Caco-2 (cell line): ENCODE measurements at regions of chr12 and their contacts with region 1.

Region 1: DNA sequence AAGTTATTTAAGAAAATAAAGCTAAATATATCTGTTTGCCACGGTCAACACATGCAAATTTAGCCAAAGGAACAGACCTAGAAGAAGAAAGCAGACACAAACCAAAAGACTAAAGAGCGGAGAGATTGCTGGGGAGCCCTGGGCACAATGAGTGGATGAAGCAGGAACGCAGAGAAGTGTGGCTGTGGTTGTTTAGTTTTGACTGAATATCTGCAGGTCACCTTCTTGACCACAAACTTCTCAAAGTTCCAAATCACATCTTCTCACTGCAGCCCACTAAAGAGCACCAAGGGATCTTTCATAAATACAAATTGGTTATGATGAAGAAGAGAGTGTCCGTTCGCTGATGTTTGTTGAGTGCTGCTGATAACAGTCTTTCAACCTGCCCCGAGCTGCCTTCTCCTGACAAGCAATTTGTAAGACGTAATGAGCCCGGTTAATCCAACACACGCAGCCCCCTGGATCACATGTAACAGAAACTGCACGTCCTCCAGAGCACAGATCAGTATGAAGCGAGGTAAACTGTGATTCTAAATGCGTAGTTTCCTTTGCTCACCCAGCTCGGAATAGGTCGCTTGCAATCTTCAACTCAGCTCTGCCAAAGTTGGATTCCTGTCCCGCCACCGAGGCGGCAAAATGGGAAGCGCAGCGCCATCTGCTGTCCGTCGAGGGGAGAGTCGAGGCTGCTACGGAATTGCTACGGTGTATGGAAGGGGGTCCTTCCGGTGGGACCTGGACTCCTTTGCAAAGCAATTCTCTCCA is 120.8 kb downstream of the GXYLT1 start:
- DNase-seq: peak; percentile 76 to 84
- H3K4me3 ChIP-seq: peak overlapping the region; percentile 27
- H3K4me3 Mint-ChIP-seq: peak overlapping the region; percentile 63
- H3K27ac Mint-ChIP-seq: no peak overlapping the region
- H3K4me1 ChIP-seq: no peaks in the 10 kb centered on the region
- H3K4me1 Mint-ChIP-seq: no peaks in the 10 kb centered on the region
- H3K27me3 ChIP-seq: peaks cover 2% of the 10 kb centered on the region
- H3K27me3 Mint-ChIP-seq: peaks cover 2% of the 10 kb centered on the region
- CTCF ChIP-seq: peak; percentile 95 to 98

Region 2: DNA sequence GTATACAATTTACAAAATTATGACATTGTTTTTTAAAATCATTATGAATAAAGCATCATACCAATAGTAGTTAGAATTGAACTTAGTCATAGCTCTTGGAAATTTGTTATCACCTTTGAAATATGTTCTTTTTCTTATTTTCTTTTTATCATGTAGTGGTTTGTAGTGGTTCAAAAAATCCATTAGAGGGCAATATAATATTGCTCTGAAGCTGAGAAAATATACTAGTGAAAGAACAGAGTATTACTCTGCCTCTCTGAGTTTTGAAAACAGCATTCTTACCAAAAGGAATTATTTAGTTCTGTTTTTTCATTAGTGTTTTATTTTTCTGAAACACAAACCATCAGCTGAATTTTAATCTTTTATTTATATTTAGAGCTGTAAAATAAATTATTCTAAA is 759.6 kb before region 1 on chr12:
- CTCF ChIA-PET with region 1: no interaction called
- POLR2A ChIA-PET with region 1: no interaction called
- intact Hi-C with region 1: loop called (anchors 5 kb)
- DNase-seq: no peak
- H3K4me3 ChIP-seq: no peak overlapping the region
- H3K4me3 Mint-ChIP-seq: no peak overlapping the region
- H3K27ac Mint-ChIP-seq: no peak overlapping the region
- H3K4me1 ChIP-seq: no peaks in the 10 kb centered on the region
- H3K4me1 Mint-ChIP-seq: no peaks in the 10 kb centered on the region
- H3K27me3 ChIP-seq: no peaks in the 10 kb centered on the region
- H3K27me3 Mint-ChIP-seq: peaks cover 5% of the 10 kb centered on the region
- CTCF ChIP-seq: peak in 1 of 2 experiments; percentile 40

Region 3: DNA sequence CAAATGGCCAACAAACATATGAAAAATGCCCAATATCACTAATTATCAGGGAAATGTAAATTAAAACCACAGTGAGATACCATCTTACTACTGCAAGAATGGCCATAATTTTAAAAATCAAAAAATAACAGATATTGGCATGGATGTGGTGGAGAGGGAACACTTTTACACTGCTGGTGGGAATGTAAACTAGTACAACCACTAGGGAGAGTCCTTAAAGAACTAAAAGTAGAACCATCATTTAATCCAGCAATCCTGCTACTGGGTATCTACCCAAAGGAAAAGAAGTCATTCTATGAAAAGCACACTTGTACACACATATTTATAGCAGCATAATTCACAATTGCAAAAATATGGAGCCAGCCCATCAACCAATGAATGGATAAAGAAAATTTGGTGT is 338.9 kb before region 1 on chr12:
- CTCF ChIA-PET with region 1: interaction called, 4 read pairs
- POLR2A ChIA-PET with region 1: no interaction called
- intact Hi-C with region 1: loop called (anchors 2 kb)
- DNase-seq: peak in 1 of 2 experiments; percentile 46
- H3K4me3 ChIP-seq: no peak overlapping the region
- H3K4me3 Mint-ChIP-seq: no peak overlapping the region
- H3K27ac Mint-ChIP-seq: no peak overlapping the region
- H3K4me1 ChIP-seq: no peaks in the 10 kb centered on the region
- H3K4me1 Mint-ChIP-seq: no peaks in the 10 kb centered on the region
- H3K27me3 ChIP-seq: no peaks in the 10 kb centered on the region
- H3K27me3 Mint-ChIP-seq: peaks cover 3% of the 10 kb centered on the region
- CTCF ChIP-seq: peak; percentile 52 to 65

Region 4: GRCh38 chr12:41869432-41869831 is 154.5 kb before region 1 on chr12:
- CTCF ChIA-PET with region 1: no interaction called
- POLR2A ChIA-PET with region 1: no interaction called
- intact Hi-C with region 1: loop called (anchors 5 kb)
- DNase-seq: no peak
- H3K4me3 ChIP-seq: no peak overlapping the region
- H3K4me3 Mint-ChIP-seq: no peak overlapping the region
- H3K27ac Mint-ChIP-seq: no peak overlapping the region
- H3K4me1 ChIP-seq: no peaks in the 10 kb centered on the region
- H3K4me1 Mint-ChIP-seq: no peaks in the 10 kb centered on the region
- H3K27me3 ChIP-seq: no peaks in the 10 kb centered on the region
- H3K27me3 Mint-ChIP-seq: peaks cover 8% of the 10 kb centered on the region
- CTCF ChIP-seq: no peak

Region 5: GRCh38 chr12:41932470-41932991 is 91.4 kb before region 1 on chr12:
- CTCF ChIA-PET with region 1: no interaction called
- POLR2A ChIA-PET with region 1: no interaction called
- intact Hi-C with region 1: loop called (anchors 5 kb)
- DNase-seq: peak in 1 of 2 experiments; percentile 25
- H3K4me3 ChIP-seq: peak overlapping the region; percentile 24
- H3K4me3 Mint-ChIP-seq: peak overlapping the region; percentile 69
- H3K27ac Mint-ChIP-seq: no peak overlapping the region
- H3K4me1 ChIP-seq: no peaks in the 10 kb centered on the region
- H3K4me1 Mint-ChIP-seq: peaks cover 7% of the 10 kb centered on the region
- H3K27me3 ChIP-seq: no peaks in the 10 kb centered on the region
- H3K27me3 Mint-ChIP-seq: peaks cover 23% of the 10 kb centered on the region
- CTCF ChIP-seq: no peak